ENCODE measurements at regions of chr5 and their contacts with region 1.

Region 1: DNA sequence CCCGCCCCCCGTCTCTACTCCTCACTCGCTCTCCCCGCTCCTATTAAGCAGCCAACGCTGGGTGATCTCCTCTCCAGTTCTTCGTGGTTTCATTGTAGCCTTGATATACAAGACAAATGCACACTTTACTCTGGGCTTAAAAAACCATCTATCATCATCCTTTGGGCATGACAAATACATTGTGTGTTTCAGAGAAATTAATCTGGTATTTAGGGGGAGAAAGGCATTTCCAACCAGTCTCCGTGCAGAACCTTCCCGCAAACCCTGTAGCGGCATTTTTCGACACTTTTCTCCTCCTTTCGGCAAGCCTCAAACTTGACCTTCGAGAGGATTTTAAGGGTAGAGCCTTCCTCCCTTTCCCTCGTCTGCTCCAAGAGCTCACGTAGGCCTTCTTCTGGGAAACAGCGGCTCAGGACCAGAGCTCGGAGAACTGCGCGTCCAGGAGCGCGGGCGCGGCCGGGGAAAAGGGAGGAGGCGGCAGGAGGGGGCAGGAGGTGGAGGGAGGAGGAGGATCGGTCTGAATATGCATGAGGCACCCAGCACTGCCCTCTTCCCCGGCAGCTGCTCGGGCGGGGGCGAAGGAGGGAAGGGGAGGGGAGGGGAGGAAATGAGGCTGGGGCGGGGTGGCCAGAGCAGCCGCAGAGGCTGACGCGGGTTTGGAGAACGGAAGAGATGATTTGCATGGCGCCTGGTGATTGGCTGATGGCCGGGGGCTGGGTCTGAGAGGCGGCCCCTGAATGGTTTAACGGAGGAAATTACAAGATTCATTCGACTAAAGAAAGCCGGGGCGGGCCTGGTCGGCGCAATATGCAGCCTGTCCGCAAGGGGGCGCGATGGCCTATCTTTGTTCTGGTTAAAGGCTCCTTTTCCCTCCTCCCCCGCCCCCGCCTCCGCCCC is 127.5 kb downstream of the TMEM161B start:
- DNase-seq: peak; percentile 97
- ATAC-seq: peak; percentile 92
- H3K4me3 ChIP-seq: peak overlapping the region; percentile 82
- H3K27ac ChIP-seq: no peak overlapping the region
- H3K4me1 ChIP-seq: peaks cover 13% of the 10 kb centered on the region; the same call in 1 of the 2 replicates
- H3K27me3 ChIP-seq: no peaks in the 10 kb centered on the region
- CTCF ChIP-seq: peak; percentile 49

Region 2: GRCh38 chr5:87541033-87541432 is 600.1 kb before region 1 on chr5:
- CTCF ChIA-PET with region 1: no interaction called
- POLR2A ChIA-PET with region 1: no interaction called
- intact Hi-C with region 1: loop called (anchors 2 kb)
- DNase-seq: peak; percentile 90
- ATAC-seq: peak; percentile 95
- H3K4me3 ChIP-seq: no peak overlapping the region
- H3K27ac ChIP-seq: no peak overlapping the region
- H3K4me1 ChIP-seq: peaks cover 6% of the 10 kb centered on the region; the same call in 1 of the 2 replicates
- H3K27me3 ChIP-seq: peaks cover 4% of the 10 kb centered on the region; the same call in 1 of the 2 replicates
- CTCF ChIP-seq: peak; percentile 57

Region 3: DNA sequence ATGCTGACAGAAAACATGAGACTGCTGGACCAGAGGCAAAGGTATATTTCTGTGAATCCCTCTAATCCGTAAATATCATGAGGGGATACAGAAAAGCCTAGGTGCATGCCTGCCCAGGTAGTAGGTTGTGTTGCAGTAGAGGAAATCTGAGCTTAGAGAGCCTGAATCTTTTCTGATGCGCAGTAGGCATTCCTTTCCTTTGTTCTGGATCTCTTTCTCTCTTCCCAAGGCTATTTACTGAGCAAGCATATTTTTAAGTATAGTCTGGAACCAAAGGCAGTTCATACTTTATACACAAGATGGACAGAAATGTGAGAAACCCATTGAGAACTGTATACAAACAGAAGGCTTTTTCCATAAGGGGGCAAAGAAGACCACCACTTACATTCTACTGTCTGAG is 231.7 kb before region 1 on chr5:
- CTCF ChIA-PET with region 1: no interaction called
- POLR2A ChIA-PET with region 1: no interaction called
- intact Hi-C with region 1: loop called (anchors 5 kb)
- DNase-seq: no peak
- ATAC-seq: no peak
- H3K4me3 ChIP-seq: no peak overlapping the region
- H3K27ac ChIP-seq: no peak overlapping the region
- H3K4me1 ChIP-seq: peaks cover 18% of the 10 kb centered on the region
- H3K27me3 ChIP-seq: no peaks in the 10 kb centered on the region
- CTCF ChIP-seq: peak; percentile 38; the same call in 1 of the 2 replicates

Region 4: GRCh38 chr5:87997662-87998061 is 143.4 kb before region 1 on chr5:
- CTCF ChIA-PET with region 1: no interaction called
- POLR2A ChIA-PET with region 1: no interaction called
- intact Hi-C with region 1: no loop called
- DNase-seq: no peak
- ATAC-seq: no peak
- H3K4me3 ChIP-seq: no peak overlapping the region
- H3K27ac ChIP-seq: no peak overlapping the region
- H3K4me1 ChIP-seq: no peaks in the 10 kb centered on the region
- H3K27me3 ChIP-seq: no peaks in the 10 kb centered on the region
- CTCF ChIP-seq: no peak

Region 5: DNA sequence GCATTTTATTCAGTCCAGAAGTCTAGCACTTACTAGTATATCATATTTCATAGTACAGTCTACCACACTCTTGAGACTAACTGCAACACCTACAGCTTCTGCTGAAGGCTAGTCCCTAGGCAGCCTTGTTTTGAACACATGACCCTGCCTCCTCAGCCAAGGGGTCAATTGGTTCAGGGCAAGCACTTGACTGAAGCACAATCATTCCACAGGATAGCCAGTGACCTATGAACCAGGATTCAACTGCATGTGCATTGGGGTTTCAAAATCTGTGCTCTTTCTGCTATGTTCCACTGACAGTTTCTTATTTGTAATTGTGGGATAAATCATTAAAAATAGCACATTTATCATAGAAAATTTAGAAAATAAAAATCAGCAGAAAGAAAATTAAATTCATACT is 59.2 kb before region 1 on chr5:
- CTCF ChIA-PET with region 1: no interaction called
- POLR2A ChIA-PET with region 1: no interaction called
- intact Hi-C with region 1: no loop called
- DNase-seq: no peak
- ATAC-seq: no peak
- H3K4me3 ChIP-seq: no peak overlapping the region
- H3K27ac ChIP-seq: no peak overlapping the region
- H3K4me1 ChIP-seq: no peaks in the 10 kb centered on the region
- H3K27me3 ChIP-seq: no peaks in the 10 kb centered on the region
- CTCF ChIP-seq: no peak

Region 6: DNA sequence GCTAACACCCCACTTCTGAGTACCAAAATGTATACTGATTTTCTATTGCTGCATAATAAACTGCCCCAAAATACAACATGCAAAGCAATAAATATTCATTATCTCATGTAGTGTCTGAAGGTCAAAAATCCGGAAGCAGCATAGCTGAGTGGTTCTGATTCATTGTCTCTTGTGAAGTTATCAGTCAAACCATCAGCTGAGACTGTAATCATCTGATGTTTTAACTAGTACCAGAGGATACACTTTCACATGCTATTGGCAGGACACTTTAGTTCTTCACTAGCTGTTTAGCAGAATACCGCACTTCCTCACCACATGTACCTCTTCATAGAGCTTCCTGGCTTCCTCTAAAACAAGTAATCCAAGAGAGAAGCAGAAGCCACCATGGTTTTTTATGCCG is 140.2 kb after region 1 on chr5:
- CTCF ChIA-PET with region 1: no interaction called
- POLR2A ChIA-PET with region 1: no interaction called
- intact Hi-C with region 1: loop called (anchors 5 kb)
- DNase-seq: no peak
- ATAC-seq: no peak
- H3K4me3 ChIP-seq: no peak overlapping the region
- H3K27ac ChIP-seq: no peak overlapping the region
- H3K4me1 ChIP-seq: peaks cover 18% of the 10 kb centered on the region; the same call in 1 of the 2 replicates
- H3K27me3 ChIP-seq: no peaks in the 10 kb centered on the region
- CTCF ChIP-seq: no peak

Region 7: GRCh38 chr5:88606626-88607025 is 465.5 kb after region 1 on chr5:
- CTCF ChIA-PET with region 1: interaction called, 5 read pairs
- POLR2A ChIA-PET with region 1: no interaction called
- intact Hi-C with region 1: loop called (anchors 1 kb)
- DNase-seq: peak; percentile 74
- ATAC-seq: peak; percentile 64
- H3K4me3 ChIP-seq: no peak overlapping the region
- H3K27ac ChIP-seq: peak overlapping the region; percentile 73
- H3K4me1 ChIP-seq: peaks cover 44% of the 10 kb centered on the region
- H3K27me3 ChIP-seq: no peaks in the 10 kb centered on the region
- CTCF ChIP-seq: no peak

Region 8: GRCh38 chr5:88690409-88691229 is 549.5 kb after region 1 on chr5:
- CTCF ChIA-PET with region 1: interaction called, 6 read pairs
- POLR2A ChIA-PET with region 1: no interaction called
- intact Hi-C with region 1: loop called (anchors 1 kb)
- DNase-seq: peak; percentile 66
- ATAC-seq: peak; percentile 75
- H3K4me3 ChIP-seq: peak overlapping the region; percentile 70
- H3K27ac ChIP-seq: no peak overlapping the region
- H3K4me1 ChIP-seq: peaks cover 16% of the 10 kb centered on the region; the same call in 1 of the 2 replicates
- H3K27me3 ChIP-seq: peaks cover 41% of the 10 kb centered on the region
- CTCF ChIP-seq: peak; percentile 97